Sigmoid colon (tissue), 7 donors: ENCODE measurements at regions of chr10 and their contacts with region 1.

Region 1: DNA sequence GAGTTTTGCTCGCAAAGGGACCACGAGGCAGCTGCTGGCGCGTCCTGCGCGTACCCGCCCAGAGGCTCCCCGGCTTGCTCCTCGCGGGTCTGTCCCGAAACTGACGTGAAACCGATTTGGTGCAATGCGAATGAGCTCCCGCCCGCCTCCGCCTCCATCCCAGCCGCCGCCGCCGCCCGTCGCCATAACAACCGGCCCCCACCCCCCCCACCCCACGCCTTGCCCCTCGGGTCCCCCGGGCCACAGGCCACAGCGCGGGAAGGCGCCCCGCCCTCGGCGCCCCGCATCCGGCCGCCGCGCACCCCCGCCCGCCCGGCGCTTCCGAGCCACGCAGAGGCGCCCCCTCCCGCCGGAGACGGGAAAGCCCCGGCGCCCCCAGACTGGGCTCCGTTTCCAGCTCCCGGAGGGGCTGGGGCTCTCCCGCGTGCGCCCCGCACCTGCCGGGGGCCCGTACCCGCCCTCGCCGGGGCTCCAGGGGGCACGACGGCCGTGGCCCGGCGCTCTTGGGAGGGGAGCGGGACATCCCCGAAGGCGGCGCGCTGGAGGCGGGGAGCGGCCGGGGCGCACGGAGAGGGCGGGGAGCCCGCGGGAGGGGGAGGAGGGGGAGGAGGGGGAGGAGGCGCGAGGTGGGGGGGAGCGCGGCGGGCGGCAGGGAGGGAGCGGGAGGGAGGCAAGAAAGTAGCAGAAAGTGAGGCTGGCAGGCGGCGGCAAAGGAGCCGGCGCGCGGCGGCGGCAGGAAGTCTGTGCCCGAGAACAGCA is at the start of gene CAMK1D:
- DNase-seq: peak; percentile 94
- H3K4me3 ChIP-seq: peak within 1 kb of the TSS; percentile 85 to 96 (median 90)
- H3K27ac ChIP-seq: peak within 1 kb of the TSS; percentile 93 to 97 (median 95)
- H3K4me1 ChIP-seq: peaks cover 0 to 22% (median 16%) of the 10 kb centered on the region in 4 donors
- H3K27me3 ChIP-seq: no peaks in the 10 kb centered on the region
- CTCF ChIP-seq: peak in 1 of 4 experiments; percentile 41
- EP300 ChIP-seq: no peak
- POLR2A ChIP-seq: peak in 1 of 2 donors; percentile 24
- total RNA-seq, gene CAMK1D: 7.2 to 10.2 (median 8.7) TPM

Region 2: GRCh38 chr10:12531305-12532220 is 182.5 kb after region 1 on chr10:
- intact Hi-C with region 1: loop called (anchors 5 kb)
- DNase-seq: peak; percentile 76
- H3K4me3 ChIP-seq: no peak overlapping the region
- H3K27ac ChIP-seq: peak overlapping the region in 3 of 4 donors; percentile 59 to 77 (median 74)
- H3K4me1 ChIP-seq: peaks cover 0 to 26% (median 14%) of the 10 kb centered on the region in 4 donors
- H3K27me3 ChIP-seq: no peaks in the 10 kb centered on the region
- CTCF ChIP-seq: no peak
- EP300 ChIP-seq: peak in 2 of 4 donors; percentile 39 to 88
- POLR2A ChIP-seq: no peak

Region 3: GRCh38 chr10:12605580-12606405 is 256.7 kb after region 1 on chr10:
- intact Hi-C with region 1: loop called (anchors 2 kb)
- DNase-seq: peak; percentile 95
- H3K4me3 ChIP-seq: peak overlapping the region; percentile 20 to 46 (median 40)
- H3K27ac ChIP-seq: peak overlapping the region; percentile 83 to 86 (median 85)
- H3K4me1 ChIP-seq: peaks cover 0 to 47% (median 27%) of the 10 kb centered on the region in 4 donors
- H3K27me3 ChIP-seq: no peaks in the 10 kb centered on the region
- CTCF ChIP-seq: no peak
- EP300 ChIP-seq: peak in 1 of 4 donors; percentile 39
- POLR2A ChIP-seq: no peak

Region 4: DNA sequence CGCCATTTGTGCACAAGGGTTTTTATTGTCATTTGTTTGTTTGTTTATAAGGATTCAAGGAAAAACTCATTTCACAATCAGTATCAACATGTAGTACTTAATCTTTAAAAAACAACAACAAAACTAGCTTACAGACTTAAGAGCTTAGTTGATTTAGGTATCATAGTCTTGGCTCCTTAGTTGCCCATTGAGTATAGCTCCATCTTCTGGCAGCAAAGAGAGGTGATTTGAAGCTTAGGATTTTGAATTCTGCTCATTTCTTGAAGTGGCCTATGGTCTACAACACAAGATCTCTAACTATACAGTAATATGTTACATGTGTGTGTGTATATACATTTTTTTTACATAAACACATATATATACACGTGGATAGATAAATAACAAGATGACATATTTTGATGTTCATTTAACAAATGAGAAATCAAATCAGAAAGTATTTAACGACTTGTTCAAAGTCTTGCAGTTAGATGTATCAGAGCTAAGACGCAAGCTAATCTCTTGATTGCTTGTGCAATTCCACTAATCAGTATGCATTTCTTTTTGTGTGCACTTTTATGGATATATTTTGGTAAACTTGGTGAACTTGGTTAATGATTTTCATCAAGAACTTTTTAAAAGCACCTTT is 307.6 kb after region 1 on chr10:
- intact Hi-C with region 1: loop called (anchors 5 kb)
- DNase-seq: no peak
- H3K4me3 ChIP-seq: no peak overlapping the region
- H3K27ac ChIP-seq: no peak overlapping the region
- H3K4me1 ChIP-seq: no peaks in the 10 kb centered on the region
- H3K27me3 ChIP-seq: no peaks in the 10 kb centered on the region
- CTCF ChIP-seq: peak; percentile 40 to 70 (median 54)
- EP300 ChIP-seq: no peak
- POLR2A ChIP-seq: no peak